ENCODE measurements at regions of chr1 and their contacts with region 1.

Region 1: DNA sequence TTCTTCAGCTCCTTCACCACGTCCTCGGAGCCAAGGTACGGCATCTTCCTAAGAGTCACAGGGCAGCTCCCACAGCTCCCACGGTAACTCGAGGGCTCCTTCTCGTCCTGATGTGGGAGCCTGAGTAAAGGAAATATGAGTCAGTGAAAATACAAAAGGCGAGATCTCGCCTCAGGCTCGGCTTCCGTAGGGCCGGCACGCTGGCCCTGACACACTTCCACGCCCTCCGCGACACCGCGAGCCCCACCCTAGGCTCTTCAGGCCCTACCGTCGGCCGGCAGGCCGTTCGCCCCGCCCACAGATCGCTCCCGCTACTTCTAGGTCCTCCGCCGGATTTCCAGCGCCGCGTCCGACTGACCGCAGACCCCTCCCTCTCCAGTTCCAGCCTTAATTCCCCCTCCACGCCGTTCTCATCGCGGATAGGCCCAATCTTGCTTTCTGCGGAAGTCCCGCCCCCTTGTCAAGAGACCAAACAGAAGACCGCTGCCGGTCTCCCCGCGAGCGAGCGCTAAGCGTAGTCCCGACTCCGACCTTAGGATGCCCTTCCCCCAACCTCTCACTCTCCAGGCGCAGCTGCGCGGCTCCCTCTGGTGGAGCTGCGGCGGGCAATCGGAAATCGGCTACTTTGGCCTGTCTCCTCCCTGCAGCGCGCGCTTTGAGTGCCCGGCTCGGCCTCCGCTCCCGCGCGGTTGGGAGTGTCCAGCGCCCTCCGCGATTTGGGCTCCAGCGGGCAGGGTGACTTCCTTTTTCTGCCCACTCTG is at the starts of genes AP4B1 and DCLRE1B:
- DNase-seq: peak; percentile 97
- H3K27ac ChIP-seq: peak within 1 kb of the TSS; percentile 94
- CTCF ChIP-seq: peak; percentile 40

Region 2: DNA sequence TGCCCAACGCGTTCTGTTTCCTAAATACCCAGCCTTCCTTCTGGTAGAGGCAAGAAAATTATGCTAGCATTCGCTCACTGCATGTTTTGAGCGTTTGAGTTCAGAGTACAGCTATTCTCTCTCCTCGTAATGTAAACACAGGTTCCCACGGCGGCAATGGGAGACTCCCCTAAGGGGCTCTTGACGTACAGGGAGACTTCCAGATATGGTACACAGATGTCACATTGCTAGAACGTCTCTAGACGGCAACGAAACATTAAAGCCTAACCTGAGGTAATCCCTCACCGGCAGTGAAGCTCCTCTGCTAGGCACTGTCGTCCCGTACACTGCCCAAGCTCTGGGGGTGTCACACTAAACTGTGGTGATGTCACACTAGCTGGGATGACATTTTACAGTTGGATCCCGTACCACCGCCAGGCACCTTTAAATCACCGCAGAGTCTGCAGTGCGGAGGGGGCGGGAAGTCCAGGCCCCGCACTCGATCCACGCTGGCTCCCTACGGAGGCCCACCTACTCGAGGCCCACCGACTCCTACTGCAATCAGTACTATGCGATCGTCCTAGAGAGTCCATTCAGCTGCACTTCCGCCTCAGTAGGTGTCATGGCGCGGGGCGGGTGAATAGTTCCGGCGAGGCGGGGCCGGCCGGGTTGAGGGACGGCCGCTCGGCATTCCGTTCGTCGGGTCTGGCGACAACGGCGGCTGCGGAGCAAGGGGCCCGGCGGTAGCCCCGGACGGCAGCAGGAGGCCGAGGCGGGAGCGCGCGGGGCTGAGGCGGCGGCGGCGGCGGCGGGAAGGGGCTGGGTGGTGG is 24.3 kb after region 1 on chr1 and contains the start of gene HIPK1:
- CTCF ChIA-PET with region 1: interaction called, 16 read pairs
- POLR2A ChIA-PET with region 1: interaction called, 19 read pairs
- DNase-seq: peak; percentile 85
- H3K27ac ChIP-seq: peak within 1 kb of the TSS; percentile 82
- CTCF ChIP-seq: no peak

Region 3: DNA sequence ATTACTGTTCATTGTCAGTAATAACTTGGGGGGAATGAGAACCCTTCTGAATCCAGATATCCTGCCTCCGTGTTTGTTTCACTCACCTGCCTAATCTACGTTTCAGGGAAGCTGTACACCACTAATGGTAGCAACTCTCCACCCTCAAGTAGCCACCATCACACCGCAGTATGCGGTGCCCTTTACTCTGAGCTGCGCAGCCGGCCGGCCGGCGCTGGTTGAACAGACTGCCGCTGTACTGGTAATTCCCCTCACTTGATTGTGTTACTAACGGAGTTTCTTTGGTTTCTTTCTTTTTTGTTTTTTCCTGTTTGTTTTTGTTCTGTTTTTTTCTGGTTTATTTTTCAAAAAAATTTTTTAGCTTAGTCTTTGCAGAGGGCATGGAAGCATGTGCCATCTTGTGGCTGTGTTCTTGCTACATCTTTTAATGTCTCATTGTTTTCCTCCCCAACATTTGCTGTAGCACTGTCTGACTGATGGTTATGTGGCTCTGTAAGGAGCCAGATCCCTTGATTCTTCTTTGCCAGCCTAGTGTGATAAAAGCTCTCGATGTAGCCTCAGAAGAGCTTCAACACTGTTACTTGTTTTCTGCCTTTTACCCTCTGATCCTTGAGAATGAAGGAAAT is 58.5 kb after region 1 on chr1:
- CTCF ChIA-PET with region 1: no interaction called
- POLR2A ChIA-PET with region 1: no interaction called
- DNase-seq: no peak
- H3K27ac ChIP-seq: no peak overlapping the region
- CTCF ChIP-seq: no peak